SK-MEL-5 (cell line): ENCODE measurements at regions of chr7 and their contacts with region 1.

Region 1: DNA sequence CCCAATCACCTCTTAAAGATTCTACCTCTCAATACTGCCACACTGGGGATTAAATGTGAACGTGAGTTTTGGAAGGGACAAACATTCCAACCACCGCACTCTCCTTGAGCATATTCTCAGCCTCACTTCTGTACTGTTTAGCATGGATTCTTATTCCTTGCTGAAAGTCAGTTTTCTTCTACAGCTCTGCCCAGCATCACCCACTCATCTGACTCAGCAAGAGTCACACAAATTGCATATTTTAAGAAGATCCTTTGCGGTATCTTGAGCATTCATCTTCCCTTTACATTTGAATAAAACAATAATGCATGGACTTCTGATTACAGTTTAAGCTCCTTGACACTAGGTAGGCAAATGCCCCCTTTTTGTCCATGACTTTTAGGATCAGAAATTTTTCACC is 251.6 kb upstream of the MKLN1 start:
- DNase-seq: no peak

Region 2: GRCh38 chr7:131424219-131424822 is 348.3 kb after region 1 on chr7:
- in situ Hi-C with region 1: loop called (anchors 25 kb)
- DNase-seq: peak; percentile 75